ENCODE measurements at regions of chr2 and their contacts with region 1.

Region 1: GRCh38 chr2:222912117-222912516 is 51.3 kb downstream of the ACSL3 start:
- DNase-seq: peak; percentile 23
- ATAC-seq: peak; percentile 97
- H3K4me3 Mint-ChIP-seq: peak overlapping the region; percentile 75
- H3K27ac Mint-ChIP-seq: peak overlapping the region; percentile 89
- H3K4me1 Mint-ChIP-seq: peaks cover 53% of the 10 kb centered on the region
- H3K27me3 Mint-ChIP-seq: no peaks in the 10 kb centered on the region
- CTCF ChIP-seq: no peak

Region 2: DNA sequence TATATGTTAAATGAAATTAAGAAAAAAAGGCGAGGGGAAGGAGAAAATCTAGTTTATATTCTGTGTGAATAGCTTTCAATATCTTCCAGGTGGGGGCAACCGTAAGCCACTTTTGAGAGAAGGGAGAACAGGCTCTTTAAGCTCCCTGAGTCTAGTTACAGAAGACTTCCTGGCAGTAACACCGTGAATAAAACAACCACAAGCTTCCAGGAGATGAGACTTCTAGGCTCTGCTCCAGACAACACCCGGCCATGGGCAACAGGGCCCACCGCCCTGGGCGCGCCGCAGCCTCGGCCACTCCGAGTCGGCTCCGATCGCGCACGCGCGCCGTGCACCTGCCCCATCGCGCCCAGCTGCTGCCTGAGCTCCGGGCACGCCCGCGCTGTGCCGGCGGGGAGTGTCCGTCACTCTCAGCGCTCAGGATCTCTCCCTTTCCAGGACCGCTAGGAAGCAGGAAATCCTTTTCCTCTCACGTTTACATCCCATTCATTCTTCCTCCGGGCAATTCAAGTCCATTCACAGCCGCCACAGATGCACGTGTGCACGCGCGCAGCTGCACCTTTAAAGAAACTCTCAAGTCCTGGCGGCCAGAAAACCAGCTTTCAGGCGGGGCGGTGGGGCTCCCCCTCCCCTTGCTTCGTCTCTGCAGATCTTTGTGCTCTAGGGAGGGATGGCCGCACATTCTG is 593.9 kb before region 1 on chr2:
- CTCF ChIA-PET with region 1: no interaction called
- POLR2A ChIA-PET with region 1: no interaction called
- intact Hi-C with region 1: loop called (anchors 2 kb)
- DNase-seq: peak; percentile 55
- ATAC-seq: peak; percentile 59
- H3K4me3 Mint-ChIP-seq: peak overlapping the region; percentile 83
- H3K27ac Mint-ChIP-seq: no peak overlapping the region
- H3K4me1 Mint-ChIP-seq: peaks cover 11% of the 10 kb centered on the region
- H3K27me3 Mint-ChIP-seq: peaks cover 49% of the 10 kb centered on the region
- CTCF ChIP-seq: no peak

Region 3: GRCh38 chr2:222655787-222656525 is 256.2 kb before region 1 on chr2 and contains the start of gene FARSB:
- CTCF ChIA-PET with region 1: no interaction called
- POLR2A ChIA-PET with region 1: interaction called, 6 read pairs
- intact Hi-C with region 1: loop called (anchors 1 kb)
- DNase-seq: peak; percentile 81
- ATAC-seq: peak; percentile 93
- H3K4me3 Mint-ChIP-seq: peak within 1 kb of the TSS; percentile 97
- H3K27ac Mint-ChIP-seq: peak within 1 kb of the TSS; percentile 99
- H3K4me1 Mint-ChIP-seq: peaks cover 47% of the 10 kb centered on the region
- H3K27me3 Mint-ChIP-seq: no peaks in the 10 kb centered on the region
- CTCF ChIP-seq: no peak
- total RNA-seq, gene FARSB: 21.6 and 23.3 TPM in 2 replicates

Region 4: GRCh38 chr2:222813177-222813843 is 98.8 kb before region 1 on chr2:
- CTCF ChIA-PET with region 1: no interaction called
- POLR2A ChIA-PET with region 1: no interaction called
- intact Hi-C with region 1: loop called (anchors 1 kb)
- DNase-seq: no peak
- ATAC-seq: peak; percentile 77
- H3K4me3 Mint-ChIP-seq: no peak overlapping the region
- H3K27ac Mint-ChIP-seq: peak overlapping the region; percentile 7
- H3K4me1 Mint-ChIP-seq: peaks cover 9% of the 10 kb centered on the region
- H3K27me3 Mint-ChIP-seq: no peaks in the 10 kb centered on the region
- CTCF ChIP-seq: no peak

Region 5: DNA sequence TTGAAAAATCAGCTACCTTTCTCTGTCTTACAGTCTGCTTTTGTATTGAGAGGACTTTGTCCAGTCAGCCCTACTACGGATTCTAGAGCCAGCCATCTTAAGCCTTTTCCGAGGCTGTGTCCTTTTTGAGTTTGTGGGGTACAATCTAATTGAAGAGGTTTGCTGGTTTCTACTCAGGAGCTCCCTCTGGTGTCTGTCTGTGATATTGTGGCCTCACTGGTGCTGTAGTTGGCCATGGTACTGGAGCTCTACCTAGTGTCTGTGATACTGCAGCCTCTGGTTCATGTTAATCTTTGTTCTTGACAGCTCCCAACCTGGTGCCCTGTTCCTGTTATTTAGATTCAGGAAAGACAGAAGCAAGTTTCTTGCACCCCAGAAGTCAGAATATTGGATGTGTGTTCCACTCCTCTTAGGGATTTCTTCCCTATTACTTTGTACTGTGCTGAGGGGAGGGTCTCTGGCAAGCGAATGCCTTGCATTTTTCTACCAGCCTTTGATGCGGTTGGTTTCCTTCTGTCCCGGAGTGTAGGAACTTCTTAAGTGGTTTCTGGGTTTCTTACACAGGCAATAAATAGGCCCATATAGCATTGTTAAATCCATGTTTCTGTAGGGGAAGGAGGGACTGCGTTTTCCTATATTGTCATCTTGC is 27.2 kb after region 1 on chr2:
- CTCF ChIA-PET with region 1: interaction called, 23 read pairs
- POLR2A ChIA-PET with region 1: interaction called, 3 read pairs
- intact Hi-C with region 1: loop called (anchors 1 kb)
- DNase-seq: peak; percentile 18
- ATAC-seq: peak; percentile 81
- H3K4me3 Mint-ChIP-seq: no peak overlapping the region
- H3K27ac Mint-ChIP-seq: no peak overlapping the region
- H3K4me1 Mint-ChIP-seq: no peaks in the 10 kb centered on the region
- H3K27me3 Mint-ChIP-seq: no peaks in the 10 kb centered on the region
- CTCF ChIP-seq: no peak